ENCODE measurements at regions of chr5 and their contacts with region 1.

Region 1: GRCh38 chr5:111284825-111285224 is 60.6 kb downstream of the CAMK4 start:
- DNase-seq: no peak
- H3K4me3 ChIP-seq: no peak overlapping the region
- H3K27ac ChIP-seq: no peak overlapping the region
- H3K4me1 ChIP-seq: no peaks in the 10 kb centered on the region
- H3K27me3 ChIP-seq: no peaks in the 10 kb centered on the region
- CTCF ChIP-seq: no peak
- POLR2A ChIP-seq: no peak

Region 2: DNA sequence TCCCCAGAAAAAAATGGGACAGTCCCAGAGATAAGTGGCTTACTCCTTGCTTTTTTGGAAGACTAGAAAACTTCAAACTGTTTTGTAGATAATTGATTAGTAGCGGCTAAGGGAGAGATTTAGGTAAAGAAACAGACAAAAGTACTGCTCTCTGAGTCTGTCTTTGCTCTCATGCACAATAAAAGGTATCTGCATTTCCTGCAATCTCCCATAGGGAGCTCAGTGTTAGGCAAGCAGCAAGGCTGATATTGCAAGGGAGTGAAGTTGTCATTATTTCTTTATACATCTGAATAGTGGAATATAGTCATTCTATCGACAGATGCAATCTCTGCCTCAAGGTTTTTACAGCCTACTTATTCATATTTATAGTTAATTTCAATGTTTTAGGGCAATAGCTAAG is 115.6 kb before region 1 on chr5:
- intact Hi-C with region 1: loop called (anchors 5 kb)
- DNase-seq: no peak
- H3K4me3 ChIP-seq: no peak overlapping the region
- H3K27ac ChIP-seq: no peak overlapping the region
- H3K4me1 ChIP-seq: no peaks in the 10 kb centered on the region
- H3K27me3 ChIP-seq: no peaks in the 10 kb centered on the region
- CTCF ChIP-seq: no peak
- POLR2A ChIP-seq: no peak

Region 3: DNA sequence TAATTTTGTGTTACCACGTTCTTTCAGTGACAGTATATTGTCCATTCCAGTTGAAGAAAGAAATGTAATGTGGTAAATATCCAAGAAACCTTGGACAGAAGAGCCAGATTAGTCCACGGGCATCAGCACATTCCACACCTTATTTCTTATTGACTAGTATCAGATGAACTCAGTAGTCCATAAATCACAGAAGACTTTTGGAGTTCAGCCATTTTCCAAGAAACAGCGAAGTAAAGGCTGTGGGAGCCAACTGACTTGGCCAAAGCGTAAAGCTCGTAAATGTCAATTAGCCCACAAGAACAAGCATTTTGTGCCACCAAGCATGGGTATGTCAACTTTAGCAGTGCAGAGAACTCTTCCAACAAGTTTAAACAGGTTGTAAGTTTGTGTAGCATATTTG is 287.7 kb after region 1 on chr5:
- intact Hi-C with region 1: no loop called
- DNase-seq: no peak
- H3K4me3 ChIP-seq: no peak overlapping the region
- H3K27ac ChIP-seq: no peak overlapping the region
- H3K4me1 ChIP-seq: peaks cover 0 to 6% (median 0%) of the 10 kb centered on the region in 3 donors
- H3K27me3 ChIP-seq: no peaks in the 10 kb centered on the region
- CTCF ChIP-seq: no peak
- POLR2A ChIP-seq: no peak

Region 4: GRCh38 chr5:111792471-111793058 is 507.7 kb after region 1 on chr5:
- intact Hi-C with region 1: no loop called
- DNase-seq: no peak
- H3K4me3 ChIP-seq: no peak overlapping the region
- H3K27ac ChIP-seq: no peak overlapping the region
- H3K4me1 ChIP-seq: no peaks in the 10 kb centered on the region
- H3K27me3 ChIP-seq: no peaks in the 10 kb centered on the region
- CTCF ChIP-seq: no peak
- POLR2A ChIP-seq: no peak

Measured in esophagus squamous epithelium (tissue), 5 donors.